Tibial artery (tissue), 4 donors: ENCODE measurements at regions of chr1 and their contacts with region 1.

Region 1: GRCh38 chr1:9494929-9495758 is 44.1 kb upstream of the SLC25A33 start:
- DNase-seq: no peak
- H3K4me3 ChIP-seq: peak overlapping the region in 1 of 2 donors; percentile 24
- H3K27ac ChIP-seq: no peak overlapping the region
- H3K4me1 ChIP-seq: peaks cover 0 to 13% (median 6%) of the 10 kb centered on the region in 4 donors
- H3K27me3 ChIP-seq: peaks cover 0 to 14% of the 10 kb centered on the region in 2 donors
- CTCF ChIP-seq: peak; percentile 91 to 95

Region 2: GRCh38 chr1:9145021-9145668 is 350.0 kb before region 1 on chr1:
- intact Hi-C with region 1: no loop called
- DNase-seq: no peak
- H3K4me3 ChIP-seq: no peak overlapping the region
- H3K27ac ChIP-seq: no peak overlapping the region
- H3K4me1 ChIP-seq: peaks cover 0 to 12% (median 8%) of the 10 kb centered on the region in 4 donors
- H3K27me3 ChIP-seq: no peaks in the 10 kb centered on the region
- CTCF ChIP-seq: no peak

Region 3: DNA sequence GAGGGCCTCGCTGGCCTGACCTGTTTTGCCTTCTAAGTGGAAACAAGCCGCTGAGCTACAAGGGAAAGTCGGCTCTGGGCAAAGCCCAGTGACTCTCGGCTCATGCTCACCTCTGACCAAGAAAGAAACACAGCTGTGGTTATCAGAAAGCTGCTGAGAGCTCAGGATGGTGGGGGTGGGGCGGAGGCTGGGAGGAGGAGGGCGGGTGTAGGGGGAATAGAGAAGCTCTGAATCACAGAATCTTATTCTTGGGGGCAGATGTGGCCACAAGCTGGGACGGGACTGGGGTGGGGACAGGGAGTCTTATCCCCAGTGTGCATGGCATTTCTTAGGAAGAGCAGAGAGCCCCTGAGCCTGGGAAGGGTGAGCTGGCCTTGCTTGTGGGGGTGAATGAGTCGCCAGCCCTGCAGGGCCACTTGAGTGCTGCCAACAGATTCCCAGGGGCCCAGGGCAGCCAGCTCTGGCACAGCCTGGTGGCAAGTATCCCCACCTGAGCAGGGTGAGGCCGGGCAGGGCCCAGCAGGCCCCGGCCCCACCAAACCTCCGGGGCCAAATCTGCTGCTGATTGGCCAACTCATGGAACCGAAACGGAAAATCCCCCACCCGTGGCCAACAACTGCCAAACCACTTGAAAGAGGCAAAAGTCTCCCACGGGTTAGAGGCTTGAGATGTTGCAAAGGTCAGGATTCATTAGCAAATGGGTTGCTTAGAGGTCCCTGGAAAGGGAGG is 81.8 kb before region 1 on chr1:
- intact Hi-C with region 1: no loop called
- DNase-seq: peak; percentile 73 to 91
- H3K4me3 ChIP-seq: peak overlapping the region in 1 of 2 donors; percentile 15
- H3K27ac ChIP-seq: peak overlapping the region; percentile 76 to 81
- H3K4me1 ChIP-seq: peaks cover 0 to 41% (median 32%) of the 10 kb centered on the region in 4 donors
- H3K27me3 ChIP-seq: no peaks in the 10 kb centered on the region
- CTCF ChIP-seq: no peak

Region 4: DNA sequence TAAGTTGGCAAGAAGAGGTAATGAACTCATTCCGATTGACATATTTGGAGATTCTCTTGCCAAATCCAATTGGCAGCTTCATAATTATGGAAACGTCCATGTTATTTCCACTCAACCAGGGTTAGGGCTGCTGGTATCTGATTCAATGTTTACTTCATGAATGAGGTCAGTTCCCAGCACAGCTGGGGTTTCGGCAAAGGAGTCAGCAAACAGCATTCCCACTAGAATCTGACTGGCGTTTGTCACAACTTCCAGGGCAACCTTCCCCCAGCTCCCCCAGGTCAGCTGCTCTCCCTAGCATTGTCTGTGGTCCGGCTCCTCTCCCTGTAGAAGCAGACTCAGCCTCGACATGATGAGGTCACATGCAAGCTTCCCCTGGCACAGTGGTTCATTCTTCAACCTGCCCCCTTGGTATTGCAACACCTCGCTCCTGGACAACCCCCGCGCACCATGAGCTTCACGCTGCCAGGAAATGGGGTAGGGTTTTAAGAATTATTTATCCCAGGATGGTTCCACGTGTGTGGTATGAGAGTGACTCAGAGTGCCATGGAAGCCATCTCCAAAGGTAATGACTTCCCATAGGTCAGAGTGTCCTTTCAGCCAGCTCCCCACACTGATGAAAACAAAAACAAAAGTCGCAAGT is 56.6 kb before region 1 on chr1:
- intact Hi-C with region 1: no loop called
- DNase-seq: peak; percentile 87 to 90
- H3K4me3 ChIP-seq: no peak overlapping the region
- H3K27ac ChIP-seq: peak overlapping the region; percentile 65 to 66
- H3K4me1 ChIP-seq: peaks cover 0 to 81% (median 45%) of the 10 kb centered on the region in 4 donors
- H3K27me3 ChIP-seq: no peaks in the 10 kb centered on the region
- CTCF ChIP-seq: no peak

Region 5: DNA sequence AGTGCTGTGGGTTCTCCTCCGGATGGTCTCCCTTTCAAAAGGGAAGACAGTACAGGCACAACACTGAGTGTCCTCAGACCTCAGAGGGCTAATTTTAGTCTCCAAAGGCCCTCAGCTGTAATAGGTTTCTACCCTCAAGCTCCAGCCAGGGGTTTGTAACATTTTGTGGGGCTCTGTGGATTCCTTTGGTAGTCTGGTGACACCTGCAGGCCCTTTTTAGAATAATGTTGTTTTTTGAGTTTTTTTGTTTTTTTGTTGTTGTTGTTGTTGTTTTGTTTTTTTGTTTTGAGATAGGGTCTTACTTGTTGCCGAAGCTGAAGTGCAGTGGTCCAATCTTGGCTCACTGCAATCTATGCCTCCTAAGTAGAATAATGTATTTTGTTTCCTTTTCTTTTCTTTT is 78.6 kb after region 1 on chr1:
- intact Hi-C with region 1: loop called (anchors 5 kb)
- DNase-seq: no peak
- H3K4me3 ChIP-seq: no peak overlapping the region
- H3K27ac ChIP-seq: no peak overlapping the region
- H3K4me1 ChIP-seq: no peaks in the 10 kb centered on the region
- H3K27me3 ChIP-seq: no peaks in the 10 kb centered on the region
- CTCF ChIP-seq: peak in 1 of 2 experiments; percentile 29